ENCODE measurements at regions of chr5 and their contacts with region 1.

Region 1: GRCh38 chr5:442335-443238 is at the start of gene EXOC3:
- DNase-seq: peak; percentile 48 to 88 (median 76)
- ATAC-seq: peak; percentile 79
- H3K4me3 ChIP-seq: peak within 1 kb of the TSS; percentile 94 to 97
- H3K4me3 Mint-ChIP-seq: peak within 1 kb of the TSS; percentile 95
- H3K27ac ChIP-seq: peak within 1 kb of the TSS; percentile 72 to 78
- H3K27ac Mint-ChIP-seq: peak within 1 kb of the TSS; percentile 93
- H3K4me1 ChIP-seq: peaks cover 26% of the 10 kb centered on the region
- H3K4me1 Mint-ChIP-seq: peaks cover 33% of the 10 kb centered on the region
- H3K27me3 ChIP-seq: no peaks in the 10 kb centered on the region
- H3K27me3 Mint-ChIP-seq: no peaks in the 10 kb centered on the region
- CTCF ChIP-seq: no peak
- total RNA-seq, gene EXOC3: 82.2 to 85.2 TPM

Region 2: DNA sequence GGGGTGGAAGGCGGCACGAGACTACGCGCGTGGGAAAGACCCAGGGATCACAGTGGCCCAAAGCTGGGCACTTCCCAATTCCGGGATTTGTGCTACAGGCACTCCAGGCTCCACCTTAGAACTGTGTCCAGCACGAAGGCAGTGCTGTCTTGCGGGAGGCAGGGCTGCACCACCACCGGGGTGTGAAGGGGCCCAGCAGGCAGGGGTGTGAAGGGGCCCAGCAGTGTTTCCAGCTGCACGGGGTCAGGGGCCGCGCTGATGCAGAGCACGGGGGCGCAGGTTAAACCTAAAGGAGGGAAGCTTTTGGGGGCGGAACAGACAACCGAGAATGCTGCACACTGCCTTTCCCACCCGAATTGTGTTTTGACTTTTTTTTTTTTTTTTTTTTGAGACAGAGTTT is 172.2 kb before region 1 on chr5:
- CTCF ChIA-PET with region 1: no interaction called
- POLR2A ChIA-PET with region 1: no interaction called
- intact Hi-C with region 1: loop called (anchors 5 kb)
- DNase-seq: peak in 2 of 9 experiments; percentile 18 to 27
- ATAC-seq: no peak
- H3K4me3 ChIP-seq: peak overlapping the region in 1 of 2 experiments; percentile 82
- H3K4me3 Mint-ChIP-seq: peak overlapping the region; percentile 85
- H3K27ac ChIP-seq: no peak overlapping the region
- H3K27ac Mint-ChIP-seq: peak overlapping the region; percentile 64
- H3K4me1 ChIP-seq: no peaks in the 10 kb centered on the region
- H3K4me1 Mint-ChIP-seq: peaks cover 37% of the 10 kb centered on the region
- H3K27me3 ChIP-seq: no peaks in the 10 kb centered on the region
- H3K27me3 Mint-ChIP-seq: no peaks in the 10 kb centered on the region
- CTCF ChIP-seq: no peak

Region 3: DNA sequence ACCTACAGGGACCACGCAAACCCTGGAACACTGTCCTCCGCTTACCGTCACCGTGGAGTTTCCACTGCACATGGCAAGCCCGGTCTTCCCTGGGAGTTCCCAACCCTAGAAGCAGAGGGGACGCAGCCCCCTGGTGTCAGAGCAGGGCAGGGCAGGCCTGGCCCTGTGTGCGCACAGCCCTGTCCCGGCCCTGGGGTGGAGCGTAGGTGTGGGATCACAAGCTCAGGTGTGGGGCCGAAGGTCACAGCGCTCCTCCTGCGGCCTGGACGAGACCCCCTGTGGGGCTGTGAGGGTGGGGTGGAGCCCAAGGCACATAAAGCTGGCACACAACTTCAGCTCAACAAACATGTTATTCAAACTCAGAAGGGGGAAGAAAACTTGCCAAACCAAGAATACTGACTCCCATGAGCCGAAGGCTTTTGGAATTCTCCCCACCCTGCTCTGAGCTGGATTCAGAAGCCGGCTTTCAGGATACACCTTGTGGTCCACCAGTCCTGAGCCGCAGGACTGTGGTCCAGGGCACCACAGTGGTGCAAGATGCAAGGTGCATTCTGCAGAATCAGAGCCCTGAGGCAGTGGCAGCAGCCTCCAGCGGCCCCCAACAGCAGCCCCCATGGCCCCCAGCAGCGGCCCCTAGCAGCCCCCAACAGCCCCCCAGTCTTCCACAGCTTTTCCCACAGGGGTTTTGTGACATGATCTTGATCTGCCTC is 11.4 kb before region 1 on chr5:
- CTCF ChIA-PET with region 1: interaction called, 16 read pairs
- POLR2A ChIA-PET with region 1: no interaction called
- intact Hi-C with region 1: no loop called
- DNase-seq: peak in 8 of 9 experiments; percentile 10 to 64 (median 44)
- ATAC-seq: peak; percentile 59
- H3K4me3 ChIP-seq: no peak overlapping the region
- H3K4me3 Mint-ChIP-seq: no peak overlapping the region
- H3K27ac ChIP-seq: no peak overlapping the region
- H3K27ac Mint-ChIP-seq: no peak overlapping the region
- H3K4me1 ChIP-seq: no peaks in the 10 kb centered on the region
- H3K4me1 Mint-ChIP-seq: no peaks in the 10 kb centered on the region
- H3K27me3 ChIP-seq: no peaks in the 10 kb centered on the region
- H3K27me3 Mint-ChIP-seq: peaks cover 8% of the 10 kb centered on the region
- CTCF ChIP-seq: peak; percentile 60

Region 4: GRCh38 chr5:456351-457199 is 14.0 kb after region 1 on chr5:
- CTCF ChIA-PET with region 1: interaction called, 10 read pairs
- POLR2A ChIA-PET with region 1: no interaction called
- intact Hi-C with region 1: loop called in 1 of 2 experiments (anchors 2 kb)
- DNase-seq: no peak
- ATAC-seq: no peak
- H3K4me3 ChIP-seq: no peak overlapping the region
- H3K4me3 Mint-ChIP-seq: no peak overlapping the region
- H3K27ac ChIP-seq: no peak overlapping the region
- H3K27ac Mint-ChIP-seq: no peak overlapping the region
- H3K4me1 ChIP-seq: peaks cover 6% of the 10 kb centered on the region
- H3K4me1 Mint-ChIP-seq: peaks cover 34% of the 10 kb centered on the region
- H3K27me3 ChIP-seq: no peaks in the 10 kb centered on the region
- H3K27me3 Mint-ChIP-seq: no peaks in the 10 kb centered on the region
- CTCF ChIP-seq: no peak

Region 5: DNA sequence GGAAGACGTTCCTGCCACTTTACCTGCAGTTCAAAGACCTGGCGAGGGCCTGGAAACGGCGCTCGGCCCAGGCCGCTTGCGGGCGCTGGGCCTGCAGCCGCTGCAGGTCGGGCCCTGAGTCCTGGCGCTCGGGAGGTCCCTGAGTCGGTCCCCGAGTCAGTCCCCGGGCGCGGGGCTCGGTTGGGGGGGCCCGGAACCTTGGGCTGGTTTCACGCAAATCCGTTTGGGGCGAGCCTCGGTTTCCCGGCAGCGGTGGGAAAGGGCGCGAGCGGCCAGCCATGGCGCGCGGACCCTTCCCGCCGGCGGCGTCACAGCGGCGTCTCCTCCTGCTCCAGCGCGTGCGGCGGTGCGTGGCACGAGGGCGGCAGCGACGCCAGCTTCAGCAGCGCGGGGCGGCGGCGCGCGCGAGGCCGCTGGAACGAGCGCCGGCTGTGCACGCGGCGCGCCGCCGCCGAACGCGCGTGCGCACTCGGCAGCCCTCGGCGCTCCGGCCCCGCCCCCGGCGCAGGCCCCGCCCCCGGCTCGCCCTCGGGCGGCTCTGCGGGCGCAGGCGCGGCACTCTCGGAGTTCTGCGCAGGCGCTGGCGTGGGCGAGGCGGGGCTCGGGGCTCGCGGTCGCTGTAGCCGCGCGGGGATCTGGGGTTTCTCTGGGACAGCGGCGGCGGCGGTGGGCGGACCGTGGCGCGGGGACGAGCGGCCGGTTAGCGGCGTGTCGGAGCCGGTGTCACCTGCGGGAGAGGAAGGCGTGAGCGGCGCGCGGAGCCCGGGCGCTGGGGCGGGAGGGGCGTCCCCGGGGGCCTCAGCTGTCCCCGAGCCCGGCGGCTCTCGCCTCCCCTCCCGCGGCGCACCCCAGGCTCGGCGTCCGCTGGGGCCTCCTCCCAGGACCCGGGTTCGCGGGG is 30.3 kb after region 1 on chr5:
- CTCF ChIA-PET with region 1: interaction called, 17 read pairs
- POLR2A ChIA-PET with region 1: no interaction called
- intact Hi-C with region 1: loop called (anchors 1 kb)
- DNase-seq: peak; percentile 75 to 94 (median 88)
- ATAC-seq: peak; percentile 91
- H3K4me3 ChIP-seq: peak overlapping the region; percentile 71 to 79
- H3K4me3 Mint-ChIP-seq: peak overlapping the region; percentile 79
- H3K27ac ChIP-seq: peak overlapping the region; percentile 66 to 84
- H3K27ac Mint-ChIP-seq: no peak overlapping the region
- H3K4me1 ChIP-seq: peaks cover 11% of the 10 kb centered on the region
- H3K4me1 Mint-ChIP-seq: peaks cover 21% of the 10 kb centered on the region
- H3K27me3 ChIP-seq: peaks cover 6 to 29% of the 10 kb centered on the region in 2 experiments
- H3K27me3 Mint-ChIP-seq: peaks cover 6% of the 10 kb centered on the region
- CTCF ChIP-seq: no peak

Region 6: GRCh38 chr5:543825-544674 is 101.5 kb after region 1 on chr5:
- CTCF ChIA-PET with region 1: no interaction called
- POLR2A ChIA-PET with region 1: no interaction called
- intact Hi-C with region 1: loop called in 1 of 2 experiments (anchors 5 kb)
- DNase-seq: peak in 8 of 9 experiments; percentile 18 to 71 (median 36)
- ATAC-seq: peak; percentile 81
- H3K4me3 ChIP-seq: peak overlapping the region; percentile 32 to 34
- H3K4me3 Mint-ChIP-seq: peak overlapping the region; percentile 68
- H3K27ac ChIP-seq: peak overlapping the region; percentile 11 to 51
- H3K27ac Mint-ChIP-seq: peak overlapping the region; percentile 81
- H3K4me1 ChIP-seq: peaks cover 17% of the 10 kb centered on the region
- H3K4me1 Mint-ChIP-seq: peaks cover 13% of the 10 kb centered on the region
- H3K27me3 ChIP-seq: no peaks in the 10 kb centered on the region
- H3K27me3 Mint-ChIP-seq: peaks cover 8% of the 10 kb centered on the region
- CTCF ChIP-seq: no peak

Region 7: DNA sequence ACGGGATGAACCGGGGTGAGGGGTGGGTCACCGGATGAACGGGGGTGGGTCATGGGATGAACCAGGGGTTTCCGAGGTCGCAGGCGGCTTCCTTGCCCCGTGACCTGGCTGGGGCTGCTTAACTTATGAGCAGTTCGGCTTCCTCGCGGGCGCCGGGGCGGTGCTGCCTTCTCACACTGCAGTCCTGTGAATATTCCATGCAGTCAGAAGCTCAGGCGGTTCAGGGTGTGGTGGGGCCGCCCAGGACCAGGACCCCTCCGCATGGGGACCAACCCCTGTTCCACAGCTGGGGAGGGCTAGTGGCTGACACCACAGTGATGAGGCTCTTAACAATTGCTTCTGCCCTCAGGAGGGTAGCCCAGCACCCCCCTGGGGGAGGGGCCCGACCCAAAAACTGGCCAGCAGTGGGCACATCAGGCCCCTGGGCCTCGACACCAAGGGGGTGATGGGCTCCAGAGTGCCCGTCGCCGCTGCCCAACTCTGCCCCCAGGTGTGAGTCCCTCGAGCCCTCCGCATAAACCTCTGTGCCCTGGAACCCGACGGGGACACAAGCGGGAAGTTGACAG is 112.6 kb after region 1 on chr5:
- CTCF ChIA-PET with region 1: no interaction called
- POLR2A ChIA-PET with region 1: no interaction called
- intact Hi-C with region 1: no loop called
- DNase-seq: peak in 1 of 9 experiments; percentile 5
- ATAC-seq: no peak
- H3K4me3 ChIP-seq: no peak overlapping the region
- H3K4me3 Mint-ChIP-seq: no peak overlapping the region
- H3K27ac ChIP-seq: no peak overlapping the region
- H3K27ac Mint-ChIP-seq: no peak overlapping the region
- H3K4me1 ChIP-seq: no peaks in the 10 kb centered on the region
- H3K4me1 Mint-ChIP-seq: no peaks in the 10 kb centered on the region
- H3K27me3 ChIP-seq: no peaks in the 10 kb centered on the region
- H3K27me3 Mint-ChIP-seq: peaks cover 21% of the 10 kb centered on the region
- CTCF ChIP-seq: no peak

Region 8: DNA sequence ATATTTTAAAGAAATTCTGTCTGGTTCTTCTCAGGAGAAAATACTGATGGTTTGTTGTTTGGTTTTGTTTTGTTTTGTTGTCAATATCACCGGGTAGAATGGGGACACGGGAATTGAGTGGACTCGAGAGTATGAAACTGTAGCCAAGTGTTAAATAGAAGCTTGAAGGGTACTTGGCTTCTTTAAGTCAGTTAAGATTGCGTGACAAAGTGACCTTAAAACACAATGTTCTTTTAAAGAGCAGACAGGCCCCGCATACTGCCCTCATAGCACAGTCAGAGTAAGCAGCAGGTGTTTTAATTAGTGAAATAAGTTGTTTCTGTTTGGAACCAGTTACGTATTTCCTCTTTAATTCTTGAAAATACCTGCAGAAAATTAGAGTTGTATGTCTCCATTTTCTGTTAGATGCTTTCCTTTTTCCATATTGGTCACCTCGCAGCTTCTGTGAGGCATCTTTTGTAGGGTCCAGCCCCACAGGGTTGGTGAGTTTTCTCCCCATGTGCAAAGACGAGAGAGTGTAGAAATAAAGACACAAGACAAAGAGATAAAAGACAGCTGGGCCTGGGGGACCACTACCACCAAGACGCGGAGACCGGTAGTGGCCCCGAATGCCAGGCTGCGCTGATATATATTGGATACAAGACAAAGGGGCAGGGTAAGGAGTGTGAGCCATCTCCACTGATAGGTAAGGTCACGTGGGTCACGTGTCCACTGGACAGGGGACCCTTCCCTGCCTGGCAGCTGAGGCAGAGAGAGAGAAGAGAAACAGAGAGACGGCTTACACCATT is 459.7 kb after region 1 on chr5:
- CTCF ChIA-PET with region 1: interaction called, 6 read pairs
- POLR2A ChIA-PET with region 1: no interaction called
- intact Hi-C with region 1: loop called in 1 of 2 experiments (anchors 10 kb)
- DNase-seq: peak in 1 of 9 experiments; percentile 37
- ATAC-seq: no peak
- H3K4me3 ChIP-seq: no peak overlapping the region
- H3K4me3 Mint-ChIP-seq: no peak overlapping the region
- H3K27ac ChIP-seq: no peak overlapping the region
- H3K27ac Mint-ChIP-seq: no peak overlapping the region
- H3K4me1 ChIP-seq: no peaks in the 10 kb centered on the region
- H3K4me1 Mint-ChIP-seq: no peaks in the 10 kb centered on the region
- H3K27me3 ChIP-seq: no peaks in the 10 kb centered on the region
- H3K27me3 Mint-ChIP-seq: no peaks in the 10 kb centered on the region
- CTCF ChIP-seq: no peak

Region 9: GRCh38 chr5:1204693-1205242 is 762.2 kb after region 1 on chr5:
- CTCF ChIA-PET with region 1: no interaction called
- POLR2A ChIA-PET with region 1: no interaction called
- intact Hi-C with region 1: no loop called
- DNase-seq: no peak
- ATAC-seq: no peak
- H3K4me3 ChIP-seq: no peak overlapping the region
- H3K4me3 Mint-ChIP-seq: no peak overlapping the region
- H3K27ac ChIP-seq: no peak overlapping the region
- H3K27ac Mint-ChIP-seq: no peak overlapping the region
- H3K4me1 ChIP-seq: no peaks in the 10 kb centered on the region
- H3K4me1 Mint-ChIP-seq: no peaks in the 10 kb centered on the region
- H3K27me3 ChIP-seq: no peaks in the 10 kb centered on the region
- H3K27me3 Mint-ChIP-seq: peaks cover 7% of the 10 kb centered on the region
- CTCF ChIP-seq: no peak